Activated T-helper 2 cell treated with anti-CD3 and anti-CD28 coated beads, Interferon-gamma antibody, Interleukin-2, Interleukin-4, amounts not matched to agents 10 μg/mL and 5 μg/mL and 100 μg/mL, durations not matched to agents 14 hours and 24 hours and 36 hours (primary cell): ENCODE measurements at regions of chr20 and their contacts with region 1.

Region 1: DNA sequence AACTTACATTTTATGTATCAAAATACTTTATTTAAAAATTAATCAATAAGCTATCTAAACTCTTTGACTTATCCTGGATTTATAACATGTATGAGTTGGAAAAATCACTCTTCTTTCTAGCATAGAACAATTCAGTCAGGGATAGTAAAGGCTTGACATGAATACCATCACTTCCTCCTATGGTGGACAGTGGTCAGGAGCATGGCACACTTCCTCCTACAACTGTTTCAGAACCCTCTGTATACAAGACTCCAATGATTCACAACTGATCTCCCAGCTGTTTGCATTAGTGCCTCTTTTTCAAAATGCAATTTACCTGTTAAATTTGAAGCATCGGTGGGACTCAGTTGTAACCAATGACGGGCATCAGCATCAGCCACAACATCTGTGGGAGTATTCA is 129.7 kb downstream of the RALGAPA2 start:
- DNase-seq: no peak
- H3K4me3 Mint-ChIP-seq: no peak overlapping the region
- H3K27ac Mint-ChIP-seq: no peak overlapping the region
- H3K4me1 Mint-ChIP-seq: peaks cover 16% of the 10 kb centered on the region
- H3K27me3 Mint-ChIP-seq: no peaks in the 10 kb centered on the region

Region 2: DNA sequence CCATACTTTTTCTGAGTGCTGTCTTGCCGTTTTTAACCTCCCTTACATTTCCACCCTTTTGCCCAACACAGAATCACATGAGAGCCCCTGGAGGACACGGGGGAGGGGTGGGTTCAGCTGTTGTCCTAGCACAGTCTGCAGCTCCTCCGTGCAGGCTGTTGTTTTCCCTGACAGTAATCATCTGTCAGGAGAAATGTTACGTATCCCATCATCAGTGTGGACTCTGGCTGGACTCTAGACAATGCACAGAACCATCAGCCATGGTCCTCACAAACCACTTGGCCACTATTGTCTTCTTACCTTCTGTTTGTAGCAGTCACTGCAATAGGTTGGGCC is 732.6 kb before region 1 on chr20:
- intact Hi-C with region 1: no loop called
- DNase-seq: no peak
- H3K4me3 Mint-ChIP-seq: no peak overlapping the region
- H3K27ac Mint-ChIP-seq: no peak overlapping the region
- H3K4me1 Mint-ChIP-seq: no peaks in the 10 kb centered on the region
- H3K27me3 Mint-ChIP-seq: peaks cover 2% of the 10 kb centered on the region

Region 3: DNA sequence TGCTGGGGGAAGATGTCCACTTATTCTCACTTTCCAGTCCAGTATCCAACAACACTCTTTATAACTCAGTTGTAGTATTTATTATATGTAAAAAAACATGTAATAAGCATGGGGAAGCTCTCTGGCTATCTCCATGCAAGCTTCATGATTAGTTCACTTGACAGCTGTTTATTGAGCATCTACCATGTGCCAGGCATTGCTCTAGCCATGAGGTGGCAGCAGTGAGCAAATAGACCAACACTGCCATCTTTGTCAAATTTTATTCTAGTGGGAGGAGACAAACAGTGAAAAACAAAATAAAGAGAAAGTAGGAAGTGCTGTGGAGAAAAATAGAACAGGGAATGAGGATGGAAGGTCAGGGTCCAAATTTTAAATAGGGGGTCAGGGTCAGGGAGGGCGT is 398.6 kb before region 1 on chr20:
- intact Hi-C with region 1: loop called (anchors 10 kb)
- DNase-seq: no peak
- H3K4me3 Mint-ChIP-seq: no peak overlapping the region
- H3K27ac Mint-ChIP-seq: no peak overlapping the region
- H3K4me1 Mint-ChIP-seq: no peaks in the 10 kb centered on the region
- H3K27me3 Mint-ChIP-seq: no peaks in the 10 kb centered on the region

Region 4: GRCh38 chr20:20824924-20825584 is 242.3 kb after region 1 on chr20:
- intact Hi-C with region 1: no loop called
- DNase-seq: peak; percentile 26
- H3K4me3 Mint-ChIP-seq: no peak overlapping the region
- H3K27ac Mint-ChIP-seq: no peak overlapping the region
- H3K4me1 Mint-ChIP-seq: no peaks in the 10 kb centered on the region
- H3K27me3 Mint-ChIP-seq: peaks cover 10% of the 10 kb centered on the region

Region 5: GRCh38 chr20:21105429-21106170 is 522.9 kb after region 1 on chr20:
- intact Hi-C with region 1: no loop called
- DNase-seq: no peak
- H3K4me3 Mint-ChIP-seq: no peak overlapping the region
- H3K27ac Mint-ChIP-seq: no peak overlapping the region
- H3K4me1 Mint-ChIP-seq: peaks cover 21% of the 10 kb centered on the region
- H3K27me3 Mint-ChIP-seq: peaks cover 78% of the 10 kb centered on the region

Region 6: DNA sequence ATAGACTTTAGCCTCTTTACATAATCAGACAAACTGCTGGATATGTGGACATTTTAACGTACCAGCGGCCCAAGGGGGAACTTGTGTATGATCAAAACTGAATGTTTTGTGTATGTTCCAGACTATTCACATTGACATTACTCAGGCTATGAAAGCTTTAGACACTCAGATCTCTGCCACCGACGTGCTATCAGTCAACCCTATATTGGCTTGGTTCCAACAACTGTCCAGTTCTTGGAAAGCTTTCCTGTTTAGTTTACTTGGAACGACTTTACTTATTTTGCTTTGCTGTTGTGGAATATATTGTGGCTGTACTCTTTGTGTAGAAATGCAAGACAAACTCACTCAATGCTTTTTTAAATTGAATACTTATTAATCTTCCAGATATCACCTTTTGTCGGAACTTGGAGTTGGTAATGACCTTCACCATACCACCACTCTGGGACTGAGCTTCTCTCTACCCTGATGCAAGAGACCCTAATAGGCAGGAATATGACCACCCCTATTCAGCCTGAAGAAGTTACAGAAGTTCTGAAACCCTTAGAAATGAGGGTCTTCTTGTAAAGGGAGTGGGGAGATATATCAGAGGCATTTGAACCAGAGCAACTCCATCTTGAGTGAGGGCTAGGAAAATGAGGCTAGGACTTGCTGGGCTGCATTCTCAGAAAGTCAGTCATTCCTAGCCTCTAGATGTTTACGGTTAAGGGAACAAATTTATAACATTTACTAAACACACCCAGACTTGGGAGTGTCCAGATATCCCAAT is 1073.8 kb after region 1 on chr20:
- intact Hi-C with region 1: no loop called
- DNase-seq: no peak
- H3K4me3 Mint-ChIP-seq: no peak overlapping the region
- H3K27ac Mint-ChIP-seq: no peak overlapping the region
- H3K4me1 Mint-ChIP-seq: no peaks in the 10 kb centered on the region
- H3K27me3 Mint-ChIP-seq: no peaks in the 10 kb centered on the region